ENCODE measurements at regions of chr1 and their contacts with region 1.

Region 1: DNA sequence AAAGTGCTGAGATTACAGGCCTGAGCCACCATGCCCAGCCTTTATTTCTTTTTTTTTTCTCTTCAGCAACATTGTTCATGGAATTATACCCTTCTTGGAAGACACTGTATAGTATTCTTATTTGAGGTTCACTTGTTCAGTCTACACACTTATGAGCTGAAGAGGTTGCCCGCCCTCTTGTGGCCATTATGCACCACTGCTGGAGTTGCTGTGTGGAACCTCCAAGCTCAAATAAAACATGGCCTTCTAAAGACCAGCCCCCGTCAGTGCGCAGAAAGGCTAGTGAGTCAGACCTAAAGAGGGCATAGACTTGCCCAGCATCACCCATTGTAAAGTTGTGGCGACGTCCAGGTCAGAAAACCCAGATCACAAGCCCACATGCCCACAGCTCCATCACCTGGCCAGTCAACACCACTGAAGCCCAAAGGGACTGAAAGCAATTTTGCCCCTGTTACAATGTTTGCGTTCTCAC is 20.4 kb downstream of the LURAP1 start:
- DNase-seq: no peak
- ATAC-seq: peak; percentile 99
- H3K4me3 ChIP-seq: no peak overlapping the region
- H3K27ac ChIP-seq: no peak overlapping the region
- H3K4me1 ChIP-seq: no peaks in the 10 kb centered on the region
- H3K27me3 ChIP-seq: no peaks in the 10 kb centered on the region
- CTCF ChIP-seq: peak; percentile 82 to 99 (median 89)
- EP300 ChIP-seq: no peak
- POLR2A ChIP-seq: no peak
- RAD21 ChIP-seq: peak; percentile 85

Region 2: DNA sequence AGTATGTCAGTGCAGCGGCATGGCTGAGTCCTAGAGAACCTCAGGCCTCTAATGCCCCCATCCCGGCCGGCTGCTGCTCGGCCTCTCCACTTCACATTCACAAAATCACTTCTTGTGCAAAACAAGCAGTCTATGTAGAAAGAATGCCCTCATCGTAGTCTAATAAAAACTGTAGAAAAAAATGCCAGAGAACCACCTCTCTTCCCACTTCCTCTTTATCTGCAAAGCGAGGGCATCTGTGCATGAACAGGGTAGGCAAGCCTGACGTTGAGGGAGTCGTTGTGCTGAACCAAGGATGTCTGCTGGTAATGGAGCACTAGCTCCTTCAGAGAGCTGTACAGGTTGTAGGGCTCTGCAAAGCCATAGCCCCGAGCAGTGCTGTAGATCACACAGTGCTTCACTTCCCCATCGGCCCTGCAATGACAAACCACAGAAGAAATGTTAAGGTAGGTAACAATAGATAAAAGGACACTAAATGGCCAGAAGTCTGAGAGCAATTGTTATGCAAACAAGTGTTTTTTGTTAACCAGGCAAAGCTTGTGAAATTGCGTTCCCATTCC is 180.0 kb before region 1 on chr1:
- CTCF ChIA-PET with region 1: interaction called, 123 read pairs
- POLR2A ChIA-PET with region 1: interaction called, 3 read pairs
- RAD21 ChIA-PET with region 1: interaction called, 33 read pairs
- SMC1A ChIA-PET with region 1: interaction called, 28 read pairs
- in situ Hi-C with region 1: loop called (anchors 5 kb)
- intact Hi-C with region 1: no loop called
- DNase-seq: peak; percentile 92
- ATAC-seq: peak; percentile 97
- H3K4me3 ChIP-seq: no peak overlapping the region
- H3K27ac ChIP-seq: peak overlapping the region; percentile 80
- H3K4me1 ChIP-seq: peaks cover 35% of the 10 kb centered on the region
- H3K27me3 ChIP-seq: no peaks in the 10 kb centered on the region
- CTCF ChIP-seq: no peak
- EP300 ChIP-seq: peak in 1 of 2 experiments; percentile 54; a peak in 2 of 4 replicates
- POLR2A ChIP-seq: peak; percentile 52; the same call in 1 of the 2 replicates
- RAD21 ChIP-seq: no peak; the same call in 1 of the 2 replicates

Region 3: DNA sequence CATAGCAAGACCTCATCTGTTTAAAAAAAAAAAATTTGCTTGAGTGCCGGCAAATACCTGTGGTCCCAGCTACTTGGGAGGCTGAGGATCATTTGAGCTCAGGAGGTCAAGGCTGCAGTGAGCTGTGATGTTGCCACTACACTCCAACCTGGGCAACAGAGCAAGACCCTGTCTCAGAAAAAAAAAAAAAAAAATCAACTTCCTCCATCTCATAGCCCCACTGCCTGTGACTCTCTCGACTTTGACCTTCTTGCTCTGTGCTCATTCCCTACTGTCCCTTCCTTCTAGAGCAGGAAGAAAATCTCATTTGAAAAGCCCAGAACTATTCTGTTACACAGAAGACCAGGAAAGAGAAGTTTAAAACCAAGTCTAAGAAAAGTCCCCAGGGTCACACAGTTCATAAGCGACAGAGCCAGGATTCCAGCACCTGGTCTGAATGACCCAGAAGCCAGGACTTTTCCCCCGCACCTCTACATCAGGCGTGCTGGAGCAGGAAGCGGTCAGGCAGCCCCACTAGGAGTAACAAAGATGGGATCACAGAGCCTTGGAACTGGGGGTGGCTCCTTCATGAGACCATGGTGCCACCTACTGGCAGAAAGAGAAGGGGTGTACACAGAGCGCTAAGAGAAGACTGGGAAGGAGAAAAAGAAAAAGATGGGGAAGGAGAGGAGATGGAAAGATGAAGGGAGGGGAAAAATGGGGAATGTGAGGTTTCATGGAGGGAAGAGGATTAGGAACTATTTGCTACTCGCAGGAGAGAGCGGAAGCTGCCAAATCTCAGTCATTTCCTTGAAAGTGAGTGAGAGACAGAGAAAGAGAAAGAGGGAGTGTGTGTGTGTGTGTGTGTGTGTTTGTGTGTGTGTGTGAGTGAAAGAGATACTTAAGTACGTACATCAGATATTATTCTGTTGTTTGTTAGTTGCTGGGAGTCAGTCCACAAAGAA is 44.1 kb before region 1 on chr1:
- CTCF ChIA-PET with region 1: interaction called, 108 read pairs
- POLR2A ChIA-PET with region 1: no interaction called
- RAD21 ChIA-PET with region 1: interaction called, 63 read pairs
- SMC1A ChIA-PET with region 1: interaction called, 52 read pairs
- in situ Hi-C with region 1: loop called (anchors 5 kb)
- intact Hi-C with region 1: loop called (anchors 1 kb)
- DNase-seq: no peak
- ATAC-seq: peak; percentile 88
- H3K4me3 ChIP-seq: no peak overlapping the region
- H3K27ac ChIP-seq: no peak overlapping the region
- H3K4me1 ChIP-seq: peaks cover 18% of the 10 kb centered on the region
- H3K27me3 ChIP-seq: no peaks in the 10 kb centered on the region
- CTCF ChIP-seq: peak; percentile 88 to 94 (median 91); a peak in 5 of 6 replicates
- EP300 ChIP-seq: no peak
- POLR2A ChIP-seq: no peak
- RAD21 ChIP-seq: peak; percentile 99

Region 4: GRCh38 chr1:46204406-46204742 is 19.1 kb before region 1 on chr1:
- CTCF ChIA-PET with region 1: interaction called, 23 read pairs
- POLR2A ChIA-PET with region 1: interaction called, 9 read pairs
- RAD21 ChIA-PET with region 1: interaction called, 5 read pairs
- SMC1A ChIA-PET with region 1: interaction called, 11 read pairs
- in situ Hi-C with region 1: no loop called
- intact Hi-C with region 1: no loop called
- DNase-seq: no peak
- ATAC-seq: no peak
- H3K4me3 ChIP-seq: no peak overlapping the region
- H3K27ac ChIP-seq: no peak overlapping the region
- H3K4me1 ChIP-seq: peaks cover 3% of the 10 kb centered on the region; the same call in 1 of the 2 replicates
- H3K27me3 ChIP-seq: no peaks in the 10 kb centered on the region
- CTCF ChIP-seq: no peak
- EP300 ChIP-seq: no peak
- POLR2A ChIP-seq: no peak
- RAD21 ChIP-seq: no peak

Region 5: DNA sequence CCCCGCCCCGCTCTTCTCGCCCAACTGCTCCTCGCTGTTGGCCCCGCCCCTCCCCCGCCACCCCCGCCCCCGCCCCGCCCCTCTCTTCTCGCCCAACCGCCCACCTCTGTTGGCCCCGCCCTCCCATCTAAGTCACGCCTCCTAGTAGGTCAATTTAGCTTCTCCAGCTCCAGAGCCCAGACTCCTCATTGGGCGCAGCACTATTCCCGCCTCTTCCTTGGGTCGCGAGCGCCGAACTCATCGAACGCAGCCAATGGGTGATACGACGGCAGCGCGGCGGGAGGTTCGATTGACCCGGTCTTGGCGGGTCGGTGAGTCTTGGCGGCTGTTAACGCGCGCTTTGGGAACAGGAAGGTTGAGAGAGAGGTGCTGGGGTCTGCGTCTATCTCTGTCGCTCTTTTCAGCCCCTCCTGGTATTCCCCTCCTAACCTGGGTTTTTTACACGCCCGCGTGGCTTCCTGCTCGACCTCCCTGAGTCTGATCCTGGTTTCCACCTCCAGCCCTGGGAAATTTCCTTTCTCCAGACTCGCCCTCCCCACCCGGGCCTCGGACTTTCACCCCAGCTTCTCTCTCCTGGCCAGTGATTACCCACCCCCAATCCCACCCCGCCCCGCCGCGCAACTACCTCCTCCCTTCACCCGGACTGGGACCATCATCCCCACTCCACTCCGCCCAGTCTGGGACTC is 24.1 kb after region 1 on chr1 and contains the start of gene RAD54L:
- CTCF ChIA-PET with region 1: interaction called, 15 read pairs
- POLR2A ChIA-PET with region 1: no interaction called
- RAD21 ChIA-PET with region 1: interaction called, 7 read pairs
- SMC1A ChIA-PET with region 1: interaction called, 9 read pairs
- in situ Hi-C with region 1: no loop called
- intact Hi-C with region 1: no loop called
- DNase-seq: peak; percentile 94
- ATAC-seq: peak; percentile 95
- H3K4me3 ChIP-seq: peak within 1 kb of the TSS; percentile 96
- H3K27ac ChIP-seq: peak within 1 kb of the TSS; percentile 84
- H3K4me1 ChIP-seq: peaks cover 7% of the 10 kb centered on the region; the same call in 1 of the 2 replicates
- H3K27me3 ChIP-seq: no peaks in the 10 kb centered on the region
- CTCF ChIP-seq: no peak
- EP300 ChIP-seq: no peak
- POLR2A ChIP-seq: peak; percentile 78
- RAD21 ChIP-seq: no peak
- polyA plus RNA-seq, gene RAD54L: 15.8 to 26.1 TPM

Measured in GM12878 (cell line).